ENCODE measurements at regions of chr1 and their contacts with region 1.

Region 1: DNA sequence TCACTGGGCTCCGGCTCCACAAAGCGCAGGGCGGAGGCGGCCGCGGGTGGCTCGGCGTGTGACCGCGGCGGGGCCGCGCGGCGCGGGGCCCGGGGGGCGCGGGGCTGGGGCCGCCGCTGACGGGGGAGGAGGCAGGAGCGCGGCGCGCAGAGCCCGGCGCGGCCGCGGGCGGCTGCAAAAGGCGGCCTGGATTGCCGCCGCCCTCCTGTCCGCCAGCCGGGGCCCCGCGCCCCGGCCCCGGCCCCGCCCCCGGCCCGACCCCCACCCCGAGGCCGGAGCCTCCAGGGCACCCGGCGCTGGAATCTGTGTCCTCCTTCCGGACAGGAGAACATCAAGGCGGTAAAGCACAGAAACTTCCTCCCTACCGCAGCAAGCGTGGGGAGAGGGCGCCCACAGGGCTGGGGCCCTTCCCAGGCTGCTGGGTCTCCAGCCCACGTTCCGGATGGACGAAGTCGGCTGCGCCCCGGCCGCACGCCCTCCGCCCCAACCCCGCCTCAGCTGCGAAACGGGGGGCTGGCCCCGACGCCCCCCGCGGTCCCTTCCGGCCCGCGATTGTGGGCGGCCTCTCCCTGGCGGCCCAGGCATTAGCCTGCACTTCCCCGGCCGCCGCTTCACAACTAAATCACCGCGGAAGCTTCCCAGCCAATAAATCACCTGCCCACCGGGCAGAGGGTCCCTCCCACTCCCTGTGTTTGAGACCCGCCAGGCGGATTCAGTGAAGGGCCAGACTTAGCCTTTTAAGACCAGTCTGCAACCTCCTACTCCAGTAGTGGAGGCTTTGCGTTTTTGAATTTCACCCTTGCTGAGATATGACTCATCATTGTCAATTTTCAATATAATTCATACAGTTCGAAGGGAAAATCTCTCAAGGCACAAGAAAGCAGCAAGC is 106.0 kb downstream of the SLC45A1 start:
- DNase-seq: peak; percentile 54 to 74 (median 64)
- ATAC-seq: peak; percentile 34 to 54 (median 49)
- H3K4me3 ChIP-seq: peak overlapping the region; percentile 64 to 98 (median 87)
- H3K27ac ChIP-seq: peak overlapping the region; percentile 93 to 100 (median 98)
- H3K4me1 ChIP-seq: peaks cover 0 to 83% (median 56%) of the 10 kb centered on the region in 12 donors
- H3K27me3 ChIP-seq: no peaks in the 10 kb centered on the region
- CTCF ChIP-seq: peak in 5 of 12 donors; percentile 10 to 27 (median 22)
- POLR2A ChIP-seq: peak in 1 of 2 donors; percentile 69

Region 2: GRCh38 chr1:8348777-8349491 is 75.0 kb before region 1 on chr1:
- intact Hi-C with region 1: loop called in 1 of 10 experiments (anchors 5 kb)
- DNase-seq: peak in 3 of 5 donors; percentile 66 to 75 (median 73)
- ATAC-seq: peak in 3 of 4 donors; percentile 42 to 61 (median 49)
- H3K4me3 ChIP-seq: no peak overlapping the region
- H3K27ac ChIP-seq: peak overlapping the region in 1 of 12 donors; percentile 65
- H3K4me1 ChIP-seq: peaks cover 0 to 50% (median 26%) of the 10 kb centered on the region in 12 donors
- H3K27me3 ChIP-seq: no peaks in the 10 kb centered on the region
- CTCF ChIP-seq: peak; percentile 76 to 91 (median 84)
- POLR2A ChIP-seq: no peak

Region 3: GRCh38 chr1:8364528-8365442 is 59.1 kb before region 1 on chr1:
- intact Hi-C with region 1: loop called in 5 of 10 experiments (anchors 2 to 10 kb)
- DNase-seq: peak; percentile 62 to 86 (median 66)
- ATAC-seq: peak; percentile 41 to 56 (median 53)
- H3K4me3 ChIP-seq: no peak overlapping the region
- H3K27ac ChIP-seq: peak overlapping the region; percentile 36 to 93 (median 76)
- H3K4me1 ChIP-seq: peaks cover 4 to 74% (median 63%) of the 10 kb centered on the region in 12 donors
- H3K27me3 ChIP-seq: no peaks in the 10 kb centered on the region
- CTCF ChIP-seq: no peak
- POLR2A ChIP-seq: no peak

Region 4: GRCh38 chr1:8409106-8409505 is 14.8 kb before region 1 on chr1:
- intact Hi-C with region 1: loop called in 2 of 10 experiments (anchors 2 kb)
- DNase-seq: no peak
- ATAC-seq: peak in 3 of 4 donors; percentile 50 to 70 (median 59)
- H3K4me3 ChIP-seq: peak overlapping the region in 2 of 12 donors; percentile 10 to 24
- H3K27ac ChIP-seq: peak overlapping the region; percentile 72 to 99 (median 82)
- H3K4me1 ChIP-seq: peaks cover 24 to 99% (median 79%) of the 10 kb centered on the region in 12 donors
- H3K27me3 ChIP-seq: no peaks in the 10 kb centered on the region
- CTCF ChIP-seq: peak in 10 of 12 donors; percentile 34 to 67 (median 47)
- POLR2A ChIP-seq: no peak

Region 5: DNA sequence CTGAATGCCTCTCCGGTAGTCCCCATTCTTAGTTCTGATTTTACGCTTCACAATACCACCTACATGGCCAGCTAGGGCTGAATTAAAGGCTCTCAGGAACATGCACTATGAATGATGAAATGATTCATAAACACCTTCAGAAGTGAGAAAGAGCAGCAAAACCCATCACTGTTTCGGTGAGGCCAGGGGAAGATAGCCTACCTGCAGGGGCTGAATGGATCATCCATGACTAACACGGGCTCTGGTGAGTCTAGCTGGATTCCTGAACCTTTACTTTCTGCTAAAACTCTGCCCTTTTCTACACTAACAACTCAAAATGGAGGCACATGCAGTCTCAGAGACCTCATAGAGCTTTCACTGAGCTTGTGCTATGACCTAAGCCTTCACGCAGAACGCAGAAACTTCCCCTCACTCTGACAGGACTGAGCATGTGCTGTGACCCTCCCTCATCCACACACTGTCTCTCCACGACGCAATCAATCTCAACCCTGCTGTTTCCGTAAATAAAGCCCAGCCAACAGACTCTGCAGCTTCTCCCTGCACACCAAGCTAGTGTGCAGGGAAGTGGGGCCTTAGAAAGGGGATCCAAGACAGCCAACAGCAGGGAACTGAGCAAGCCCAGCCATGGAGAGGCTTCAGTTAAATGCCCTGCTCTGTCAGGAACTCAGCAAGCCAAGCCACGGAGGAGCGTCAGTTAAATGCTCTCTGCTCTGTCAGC is 101.8 kb after region 1 on chr1:
- intact Hi-C with region 1: loop called in 5 of 10 experiments (anchors 5 to 10 kb)
- DNase-seq: peak; percentile 75 to 90 (median 89)
- ATAC-seq: peak; percentile 95 to 100 (median 99)
- H3K4me3 ChIP-seq: peak overlapping the region; percentile 8 to 73 (median 58)
- H3K27ac ChIP-seq: peak overlapping the region; percentile 76 to 92 (median 86)
- H3K4me1 ChIP-seq: peaks cover 11 to 55% (median 39%) of the 10 kb centered on the region in 12 donors
- H3K27me3 ChIP-seq: no peaks in the 10 kb centered on the region
- CTCF ChIP-seq: no peak
- POLR2A ChIP-seq: peak in 1 of 2 donors; percentile 70